H1 (cell line): ENCODE measurements at regions of chr10 and their contacts with region 1.

Region 1: GRCh38 chr10:91632671-91633550 is at the start of gene PPP1R3C:
- DNase-seq: peak; percentile 73 to 90
- H3K4me3 ChIP-seq: peak within 1 kb of the TSS; percentile 23 to 55 (median 36)
- H3K27ac ChIP-seq: no peak within 1 kb of the TSS
- H3K4me1 ChIP-seq: peaks cover 0 to 3% (median 3%) of the 10 kb centered on the region in 4 experiments; a peak in 2 of 7 replicates
- H3K27me3 ChIP-seq: peaks cover 4 to 25% (median 20%) of the 10 kb centered on the region in 4 experiments
- CTCF ChIP-seq: peak in 2 of 3 experiments; percentile 45
- EP300 ChIP-seq: no peak
- POLR2A ChIP-seq: no peak; a peak in 1 of 3 replicates
- RAD21 ChIP-seq: peak; percentile 43 to 50
- total RNA-seq, gene PPP1R3C: 1.3 and 1.7 TPM in 2 replicates

Region 2: GRCh38 chr10:91462423-91462822 is 170.5 kb before region 1 on chr10:
- CTCF ChIA-PET with region 1: no interaction called
- POLR2A ChIA-PET with region 1: no interaction called
- DNase-seq: no peak
- H3K4me3 ChIP-seq: no peak overlapping the region
- H3K27ac ChIP-seq: no peak overlapping the region
- H3K4me1 ChIP-seq: no peaks in the 10 kb centered on the region
- H3K27me3 ChIP-seq: no peaks in the 10 kb centered on the region
- CTCF ChIP-seq: no peak
- EP300 ChIP-seq: no peak
- POLR2A ChIP-seq: no peak
- RAD21 ChIP-seq: no peak

Region 3: GRCh38 chr10:91493313-91493712 is 139.6 kb before region 1 on chr10:
- CTCF ChIA-PET with region 1: interaction called, 51 read pairs
- POLR2A ChIA-PET with region 1: no interaction called
- DNase-seq: no peak
- H3K4me3 ChIP-seq: no peak overlapping the region
- H3K27ac ChIP-seq: no peak overlapping the region
- H3K4me1 ChIP-seq: no peaks in the 10 kb centered on the region
- H3K27me3 ChIP-seq: no peaks in the 10 kb centered on the region
- CTCF ChIP-seq: peak in 1 of 3 experiments; percentile 3; a peak in 1 of 4 replicates
- EP300 ChIP-seq: no peak
- POLR2A ChIP-seq: no peak
- RAD21 ChIP-seq: peak in 1 of 2 experiments; percentile 28; a peak in 3 of 4 replicates

Region 4: GRCh38 chr10:91567815-91568214 is 65.1 kb before region 1 on chr10:
- CTCF ChIA-PET with region 1: interaction called, 11 read pairs
- POLR2A ChIA-PET with region 1: no interaction called
- DNase-seq: no peak
- H3K4me3 ChIP-seq: no peak overlapping the region
- H3K27ac ChIP-seq: no peak overlapping the region
- H3K4me1 ChIP-seq: no peaks in the 10 kb centered on the region
- H3K27me3 ChIP-seq: no peaks in the 10 kb centered on the region
- CTCF ChIP-seq: no peak
- EP300 ChIP-seq: no peak
- POLR2A ChIP-seq: no peak
- RAD21 ChIP-seq: no peak

Region 5: GRCh38 chr10:91617073-91617580 is 15.8 kb before region 1 on chr10:
- CTCF ChIA-PET with region 1: interaction called, 14 read pairs
- POLR2A ChIA-PET with region 1: no interaction called
- DNase-seq: no peak
- H3K4me3 ChIP-seq: no peak overlapping the region
- H3K27ac ChIP-seq: no peak overlapping the region
- H3K4me1 ChIP-seq: no peaks in the 10 kb centered on the region
- H3K27me3 ChIP-seq: no peaks in the 10 kb centered on the region
- CTCF ChIP-seq: no peak
- EP300 ChIP-seq: no peak
- POLR2A ChIP-seq: no peak
- RAD21 ChIP-seq: no peak

Region 6: DNA sequence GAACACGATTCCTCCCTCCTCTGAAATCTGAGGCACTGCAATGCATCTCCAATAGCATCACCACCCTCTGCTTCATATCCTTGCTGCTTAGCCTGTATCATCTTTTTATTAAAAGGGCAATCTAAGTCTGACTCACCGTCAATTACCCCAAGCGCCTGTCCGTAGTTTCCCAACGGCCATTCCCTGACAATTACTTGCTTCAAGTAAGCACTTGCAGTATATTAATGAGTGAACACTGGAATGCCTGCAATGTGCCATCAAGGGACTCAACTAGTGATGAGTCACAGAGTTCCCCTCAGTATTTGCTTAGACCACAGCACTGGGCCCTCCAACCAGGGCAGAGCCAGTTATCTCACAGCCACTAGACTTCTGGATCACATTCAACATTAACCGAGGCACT is 19.5 kb after region 1 on chr10:
- CTCF ChIA-PET with region 1: interaction called, 55 read pairs
- POLR2A ChIA-PET with region 1: no interaction called
- DNase-seq: no peak
- H3K4me3 ChIP-seq: no peak overlapping the region
- H3K27ac ChIP-seq: no peak overlapping the region
- H3K4me1 ChIP-seq: no peaks in the 10 kb centered on the region
- H3K27me3 ChIP-seq: no peaks in the 10 kb centered on the region
- CTCF ChIP-seq: no peak
- EP300 ChIP-seq: no peak
- POLR2A ChIP-seq: no peak
- RAD21 ChIP-seq: no peak

Region 7: DNA sequence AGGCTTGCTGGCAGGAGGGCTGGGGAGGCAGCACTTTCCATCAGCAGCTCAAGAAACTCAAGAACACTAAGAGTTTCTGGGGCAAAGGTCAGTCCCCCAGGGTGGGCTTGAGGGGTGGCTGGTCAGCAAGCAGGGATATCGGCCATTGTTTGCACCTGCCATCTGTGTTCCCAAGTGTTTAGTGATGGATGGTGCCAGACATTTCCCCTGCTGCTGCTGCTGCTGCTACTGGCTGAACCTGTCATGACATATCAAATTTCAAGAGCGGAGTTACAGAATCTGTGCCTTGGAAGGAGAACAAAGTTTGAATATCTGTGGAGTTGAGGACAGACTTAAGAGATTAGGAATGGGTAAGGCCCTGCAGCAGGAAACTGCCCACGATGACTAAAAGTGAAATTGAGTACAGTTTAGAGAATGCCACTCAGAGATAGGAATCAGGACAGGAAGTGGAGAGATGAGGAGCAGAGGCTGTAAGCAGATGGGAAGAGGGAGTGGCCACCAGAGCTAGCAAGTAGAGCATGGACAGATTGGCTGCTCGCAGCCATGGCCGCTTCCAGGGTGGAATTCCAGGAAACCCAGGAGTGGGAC is 39.2 kb after region 1 on chr10:
- CTCF ChIA-PET with region 1: interaction called, 51 read pairs
- POLR2A ChIA-PET with region 1: no interaction called
- DNase-seq: no peak
- H3K4me3 ChIP-seq: no peak overlapping the region
- H3K27ac ChIP-seq: no peak overlapping the region
- H3K4me1 ChIP-seq: peaks cover 0 to 7% (median 2%) of the 10 kb centered on the region in 4 experiments; a peak in 5 of 7 replicates
- H3K27me3 ChIP-seq: no peaks in the 10 kb centered on the region
- CTCF ChIP-seq: no peak
- EP300 ChIP-seq: no peak
- POLR2A ChIP-seq: no peak
- RAD21 ChIP-seq: no peak

Region 8: GRCh38 chr10:91708174-91708861 is 75.4 kb after region 1 on chr10:
- CTCF ChIA-PET with region 1: interaction called, 12 read pairs
- POLR2A ChIA-PET with region 1: no interaction called
- DNase-seq: no peak
- H3K4me3 ChIP-seq: no peak overlapping the region
- H3K27ac ChIP-seq: no peak overlapping the region
- H3K4me1 ChIP-seq: no peaks in the 10 kb centered on the region
- H3K27me3 ChIP-seq: no peaks in the 10 kb centered on the region
- CTCF ChIP-seq: no peak
- EP300 ChIP-seq: no peak
- POLR2A ChIP-seq: no peak
- RAD21 ChIP-seq: no peak